SK-N-SH (cell line): ENCODE measurements at regions of chr13 and their contacts with region 1.

Region 1: GRCh38 chr13:36346222-36347083 is at the start of gene SPART:
- DNase-seq: peak; percentile 80
- H3K4me3 ChIP-seq: peak within 1 kb of the TSS; percentile 88 to 92
- H3K27ac ChIP-seq: peak within 1 kb of the TSS; percentile 64 to 66
- H3K4me1 ChIP-seq: no peaks in the 10 kb centered on the region; a peak in 3 of 4 replicates
- H3K27me3 ChIP-seq: no peaks in the 10 kb centered on the region
- CTCF ChIP-seq: peak; percentile 97
- EP300 ChIP-seq: no peak
- RAD21 ChIP-seq: peak; percentile 80
- polyA plus RNA-seq, gene SPART: 4.8 and 8.4 TPM in 2 replicates

Region 2: DNA sequence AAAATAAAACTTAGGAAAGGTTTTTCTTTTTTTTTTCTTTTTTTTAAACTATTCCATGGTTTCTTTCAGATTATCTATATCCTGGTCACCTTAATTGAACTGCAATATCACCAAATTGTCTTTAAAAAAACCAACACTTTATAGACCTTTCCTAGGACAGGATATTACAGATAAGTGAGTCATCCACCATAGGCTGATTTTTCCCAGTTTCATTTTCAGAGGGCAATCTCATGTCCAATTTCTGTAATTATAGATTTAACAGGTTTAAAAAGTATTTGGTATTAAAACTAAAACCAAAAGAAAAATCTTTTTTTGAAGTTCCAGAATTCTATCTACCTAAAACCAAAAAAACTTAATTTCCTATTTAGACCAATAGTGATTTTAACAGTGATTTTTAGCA is 13.5 kb before region 1 on chr13:
- CTCF ChIA-PET with region 1: interaction called, 10 read pairs
- POLR2A ChIA-PET with region 1: no interaction called
- DNase-seq: no peak
- H3K4me3 ChIP-seq: no peak overlapping the region
- H3K27ac ChIP-seq: no peak overlapping the region
- H3K4me1 ChIP-seq: no peaks in the 10 kb centered on the region
- H3K27me3 ChIP-seq: no peaks in the 10 kb centered on the region
- CTCF ChIP-seq: no peak
- EP300 ChIP-seq: no peak
- RAD21 ChIP-seq: no peak

Region 3: GRCh38 chr13:36357692-36358091 is 11.2 kb after region 1 on chr13:
- CTCF ChIA-PET with region 1: interaction called, 24 read pairs
- POLR2A ChIA-PET with region 1: no interaction called
- DNase-seq: no peak
- H3K4me3 ChIP-seq: no peak overlapping the region
- H3K27ac ChIP-seq: no peak overlapping the region; a peak in 1 of 4 replicates
- H3K4me1 ChIP-seq: no peaks in the 10 kb centered on the region; a peak in 2 of 4 replicates
- H3K27me3 ChIP-seq: no peaks in the 10 kb centered on the region; the same call in 1 of the 2 replicates
- CTCF ChIP-seq: no peak
- EP300 ChIP-seq: no peak
- RAD21 ChIP-seq: no peak